ENCODE measurements at regions of chr19 and their contacts with region 1.

Region 1: DNA sequence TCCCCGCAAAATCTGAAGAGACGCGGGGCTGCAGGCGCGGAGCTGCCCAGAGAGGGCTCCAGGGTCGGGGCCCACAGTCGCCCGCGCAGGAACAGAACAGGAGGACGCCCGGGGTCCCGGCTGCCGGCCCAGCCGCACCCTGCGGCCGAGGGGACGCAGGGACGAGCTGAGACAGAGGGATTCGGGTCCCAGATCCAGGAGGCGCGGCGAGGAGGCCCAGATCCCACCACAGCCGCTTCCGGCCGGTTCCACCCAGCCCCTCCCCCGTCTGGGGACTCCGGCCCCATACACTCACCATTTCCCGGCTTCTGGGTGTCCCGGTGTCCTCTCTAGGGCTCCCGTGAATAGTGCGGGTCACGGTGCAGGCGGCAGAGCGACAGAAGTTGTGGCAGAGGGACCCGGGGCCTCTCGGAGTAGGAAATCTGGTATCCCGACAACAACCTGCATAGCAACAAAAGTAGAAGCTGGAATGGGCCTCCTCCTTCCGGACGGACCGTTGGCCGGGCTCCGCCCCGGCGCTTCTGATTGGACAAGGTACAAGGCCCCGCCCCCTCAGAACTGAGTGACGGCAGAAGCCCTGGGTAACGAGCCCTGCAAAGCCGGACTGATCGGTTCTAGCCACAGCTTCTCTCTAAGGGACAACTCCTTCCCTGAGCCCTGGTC is at the start of gene ZNF20:
- DNase-seq: peak; percentile 74 to 94 (median 84)
- ATAC-seq: peak; percentile 85
- H3K4me3 ChIP-seq: peak within 1 kb of the TSS; percentile 97
- H3K4me3 Mint-ChIP-seq: peak within 1 kb of the TSS; percentile 88
- H3K27ac ChIP-seq: peak within 1 kb of the TSS in 1 of 2 donors; percentile 44
- H3K27ac Mint-ChIP-seq: peak within 1 kb of the TSS; percentile 47
- H3K4me1 ChIP-seq: peaks cover 36% of the 10 kb centered on the region
- H3K4me1 Mint-ChIP-seq: peaks cover 43% of the 10 kb centered on the region
- H3K27me3 ChIP-seq: no peaks in the 10 kb centered on the region
- H3K27me3 Mint-ChIP-seq: no peaks in the 10 kb centered on the region
- CTCF ChIP-seq: no peak
- total RNA-seq, gene ZNF20: 1.0 to 1.2 TPM

Region 2: DNA sequence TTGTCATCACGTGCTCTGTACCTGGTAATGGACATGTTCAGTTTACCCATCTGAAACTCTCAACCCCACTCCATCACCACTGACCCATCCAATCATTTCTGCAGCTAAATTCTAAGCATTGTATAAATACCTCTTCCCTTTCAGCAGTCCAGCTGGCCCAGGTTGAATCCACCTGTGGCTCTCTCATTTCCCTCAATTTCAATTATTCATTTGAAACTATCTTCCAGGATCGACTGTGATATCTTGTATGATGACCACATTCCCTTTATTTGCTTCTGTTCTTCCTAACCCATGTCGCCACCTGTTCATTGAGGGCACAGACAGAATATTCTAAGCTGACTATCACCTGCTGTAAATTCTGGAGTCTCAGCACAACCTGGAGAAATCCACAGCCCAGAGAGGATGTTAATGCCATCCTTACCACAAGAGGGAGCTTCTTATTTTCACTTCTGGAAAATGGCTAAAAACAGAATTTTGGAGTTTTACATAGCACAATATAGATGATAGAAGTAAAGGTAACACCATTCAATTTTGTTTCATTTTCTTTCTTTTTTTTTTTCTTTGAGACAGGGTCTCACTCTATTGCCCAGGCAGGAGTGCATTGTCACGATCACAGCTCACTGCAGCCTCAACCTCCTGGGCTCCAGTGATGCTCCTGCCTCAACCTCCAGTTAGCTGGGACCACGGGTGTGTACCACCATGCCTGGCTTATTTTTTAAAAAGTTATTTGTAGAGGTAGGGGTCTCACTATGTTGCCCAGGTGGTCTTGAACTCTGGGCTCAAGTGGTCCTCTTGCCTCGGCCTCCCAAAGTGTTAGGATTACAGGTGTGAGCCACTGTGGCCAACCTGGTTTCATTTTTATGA is 439.9 kb before region 1 on chr19:
- CTCF ChIA-PET with region 1: no interaction called
- POLR2A ChIA-PET with region 1: no interaction called
- intact Hi-C with region 1: loop called (anchors 2 to 5 kb)
- DNase-seq: peak in 3 of 14 experiments; percentile 32 to 53 (median 51)
- ATAC-seq: peak; percentile 17
- H3K4me3 ChIP-seq: no peak overlapping the region
- H3K4me3 Mint-ChIP-seq: no peak overlapping the region
- H3K27ac ChIP-seq: no peak overlapping the region
- H3K27ac Mint-ChIP-seq: no peak overlapping the region
- H3K4me1 ChIP-seq: peaks cover 1% of the 10 kb centered on the region
- H3K4me1 Mint-ChIP-seq: peaks cover under 1% of the 10 kb centered on the region
- H3K27me3 ChIP-seq: peaks cover 3 to 7% of the 10 kb centered on the region in 2 experiments
- H3K27me3 Mint-ChIP-seq: peaks cover 16% of the 10 kb centered on the region
- CTCF ChIP-seq: peak; percentile 67

Region 3: DNA sequence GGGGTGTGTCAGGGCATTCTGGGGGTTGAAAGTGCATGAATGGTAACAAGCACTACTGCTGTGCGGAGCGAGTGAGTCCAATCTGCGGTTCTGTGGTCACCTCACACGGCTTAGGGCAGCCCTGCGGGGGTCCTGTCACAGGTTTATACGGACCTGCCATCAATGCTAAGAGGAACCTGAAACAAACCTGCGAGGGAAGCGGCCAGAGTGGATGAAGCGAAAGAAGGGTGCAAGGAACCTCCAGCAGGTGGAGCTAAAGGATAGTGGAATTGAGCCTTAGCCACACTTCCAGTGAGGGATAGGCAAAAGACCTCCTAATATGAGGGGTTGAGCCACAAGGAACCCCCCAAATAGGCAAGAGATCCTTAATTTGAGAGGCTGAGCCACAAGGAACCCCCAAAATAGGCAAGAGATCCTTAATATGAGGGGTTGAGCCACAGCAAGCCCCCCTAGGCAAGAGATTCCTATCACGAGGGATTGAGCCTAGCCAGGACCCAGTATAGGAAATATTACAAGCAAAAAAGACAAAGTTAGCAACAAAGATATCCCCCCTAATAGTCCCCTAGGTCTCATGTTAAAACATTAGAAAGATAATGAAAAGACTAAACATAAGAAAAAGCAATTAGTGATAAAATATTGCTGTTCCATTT is 258.7 kb before region 1 on chr19:
- CTCF ChIA-PET with region 1: interaction called, 11 read pairs
- POLR2A ChIA-PET with region 1: interaction called, 3 read pairs
- intact Hi-C with region 1: loop called (anchors 1 kb)
- DNase-seq: peak; percentile 39 to 82 (median 54)
- ATAC-seq: peak; percentile 60
- H3K4me3 ChIP-seq: no peak overlapping the region
- H3K4me3 Mint-ChIP-seq: no peak overlapping the region
- H3K27ac ChIP-seq: no peak overlapping the region
- H3K27ac Mint-ChIP-seq: no peak overlapping the region
- H3K4me1 ChIP-seq: peaks cover 4% of the 10 kb centered on the region
- H3K4me1 Mint-ChIP-seq: no peaks in the 10 kb centered on the region
- H3K27me3 ChIP-seq: no peaks in the 10 kb centered on the region
- H3K27me3 Mint-ChIP-seq: no peaks in the 10 kb centered on the region
- CTCF ChIP-seq: peak; percentile 74

Region 4: DNA sequence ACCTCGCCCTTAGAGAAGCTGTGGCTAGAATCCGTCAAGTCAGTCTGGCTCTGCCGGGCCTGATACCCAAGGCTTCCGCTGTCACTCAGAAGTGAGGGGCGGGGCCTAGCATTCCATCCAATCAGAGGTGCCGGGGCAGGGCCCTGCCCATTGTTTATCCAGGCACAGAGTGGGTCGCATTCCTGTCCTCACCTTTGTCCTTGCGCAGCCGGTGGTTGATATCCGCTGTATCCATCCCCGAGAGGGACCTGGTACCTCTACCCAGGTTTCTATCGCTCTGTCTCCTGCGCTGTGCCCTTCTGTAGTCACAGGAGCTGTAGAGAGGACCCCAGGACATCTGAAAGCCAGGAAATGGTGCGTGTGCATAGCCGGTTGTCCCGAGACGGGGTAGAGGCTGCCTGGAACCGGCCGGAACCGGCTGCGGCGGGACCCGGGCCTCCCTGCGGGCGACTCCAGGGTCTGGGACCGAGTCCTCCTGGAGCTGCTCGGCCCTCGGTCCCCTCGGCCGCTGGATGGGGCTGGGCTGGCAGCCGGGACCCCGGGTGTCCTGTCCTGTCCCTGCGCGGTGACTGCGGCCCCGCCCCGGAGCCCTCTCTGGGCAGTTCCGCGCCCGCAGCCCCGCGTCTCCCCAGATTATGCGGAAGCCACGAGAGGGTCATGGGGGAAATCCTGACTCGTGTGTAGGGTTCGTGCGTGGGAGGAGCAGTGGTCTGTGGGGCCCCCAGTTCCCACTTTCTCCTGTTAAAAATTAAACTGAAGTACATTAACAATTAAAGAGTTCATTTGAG is 175.0 kb before region 1 on chr19 and contains the start of gene ZNF763:
- CTCF ChIA-PET with region 1: interaction called, 20 read pairs
- POLR2A ChIA-PET with region 1: interaction called, 6 read pairs
- intact Hi-C with region 1: loop called (anchors 1 kb)
- DNase-seq: peak; percentile 80 to 95 (median 86)
- ATAC-seq: peak; percentile 93
- H3K4me3 ChIP-seq: peak within 1 kb of the TSS; percentile 67
- H3K4me3 Mint-ChIP-seq: peak within 1 kb of the TSS; percentile 95
- H3K27ac ChIP-seq: peak within 1 kb of the TSS; percentile 80 to 83
- H3K27ac Mint-ChIP-seq: peak within 1 kb of the TSS; percentile 88
- H3K4me1 ChIP-seq: peaks cover 28% of the 10 kb centered on the region
- H3K4me1 Mint-ChIP-seq: peaks cover 27% of the 10 kb centered on the region
- H3K27me3 ChIP-seq: no peaks in the 10 kb centered on the region
- H3K27me3 Mint-ChIP-seq: no peaks in the 10 kb centered on the region
- CTCF ChIP-seq: no peak
- total RNA-seq, gene ZNF763: 2.5 to 2.9 TPM

Region 5: DNA sequence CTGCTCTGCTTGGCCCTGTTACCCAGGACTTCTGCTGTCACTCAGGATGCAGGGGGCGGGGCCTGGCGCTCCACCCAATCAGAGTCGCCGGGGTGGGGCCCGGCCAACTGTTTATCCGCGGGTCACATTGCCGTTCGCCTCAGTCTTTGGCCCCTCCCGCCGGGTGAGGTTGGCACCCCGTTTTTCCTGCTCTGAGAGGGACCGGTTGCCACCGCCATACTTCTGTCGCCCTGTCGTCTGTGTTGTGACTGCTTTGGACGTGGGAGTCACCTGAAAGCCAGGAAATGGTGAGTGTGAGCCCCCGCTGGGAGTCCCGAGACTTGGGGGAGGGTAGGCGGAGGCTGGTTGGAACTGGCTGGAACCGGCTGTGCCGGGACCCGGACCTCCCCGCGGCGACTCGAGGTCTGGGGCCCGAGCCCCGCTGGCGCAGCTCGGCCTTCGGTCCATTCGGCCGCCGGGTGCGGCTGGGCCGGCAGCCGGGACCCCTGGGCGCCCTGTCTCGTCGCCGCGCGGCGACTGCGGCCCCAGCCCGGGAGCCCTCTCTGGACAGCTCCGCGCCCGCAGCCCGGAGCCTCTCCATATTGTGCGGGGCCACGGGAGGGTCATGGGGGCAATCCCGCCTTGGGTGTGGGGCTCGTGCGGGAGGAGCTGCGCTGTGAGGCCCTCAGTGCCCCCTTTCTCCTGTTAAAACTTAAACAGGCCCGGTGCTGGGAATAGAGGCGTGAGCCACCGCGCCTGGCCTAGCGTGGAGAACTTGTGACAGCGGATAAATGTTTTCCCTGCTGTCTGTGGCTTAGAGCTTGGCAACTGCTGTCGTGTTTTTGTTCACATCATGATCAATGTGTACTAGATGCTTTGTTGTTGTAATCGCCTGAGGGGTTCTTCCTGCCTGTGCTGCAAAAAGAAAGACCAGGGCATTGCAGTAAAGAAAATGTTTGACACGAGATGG is 75.2 kb before region 1 on chr19 and contains the start of gene ZNF844:
- CTCF ChIA-PET with region 1: interaction called, 23 read pairs
- POLR2A ChIA-PET with region 1: interaction called, 4 read pairs
- intact Hi-C with region 1: no loop called
- DNase-seq: peak; percentile 40 to 84 (median 62)
- ATAC-seq: peak; percentile 87
- H3K4me3 ChIP-seq: peak within 1 kb of the TSS; percentile 74
- H3K4me3 Mint-ChIP-seq: peak within 1 kb of the TSS; percentile 91
- H3K27ac ChIP-seq: peak within 1 kb of the TSS in 1 of 2 donors; percentile 46
- H3K27ac Mint-ChIP-seq: peak within 1 kb of the TSS; percentile 65
- H3K4me1 ChIP-seq: peaks cover 21% of the 10 kb centered on the region
- H3K4me1 Mint-ChIP-seq: peaks cover 5% of the 10 kb centered on the region
- H3K27me3 ChIP-seq: no peaks in the 10 kb centered on the region
- H3K27me3 Mint-ChIP-seq: no peaks in the 10 kb centered on the region
- CTCF ChIP-seq: no peak
- total RNA-seq, gene ZNF844: 22.2 to 23.7 TPM

Region 6: DNA sequence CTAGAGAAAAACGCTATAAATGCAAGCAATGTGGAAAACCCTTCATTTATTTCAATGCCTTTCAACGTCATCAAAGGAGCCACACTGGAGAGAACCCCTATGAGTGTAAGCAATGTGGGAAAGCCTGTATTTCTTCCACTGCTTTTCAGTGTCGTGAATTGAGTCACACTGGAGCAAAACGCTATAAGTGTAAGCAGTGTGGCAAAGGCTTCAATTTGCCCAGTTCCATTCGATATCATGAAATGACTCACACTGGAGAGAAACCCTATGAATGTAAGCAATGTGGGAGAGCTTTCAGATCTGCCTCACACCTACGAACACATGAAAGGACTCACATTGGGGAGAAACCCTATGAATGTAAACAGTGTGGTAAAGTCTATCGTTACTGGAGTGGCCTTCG is 27.3 kb before region 1 on chr19:
- CTCF ChIA-PET with region 1: no interaction called
- POLR2A ChIA-PET with region 1: no interaction called
- intact Hi-C with region 1: no loop called
- DNase-seq: no peak
- ATAC-seq: no peak
- H3K4me3 ChIP-seq: no peak overlapping the region
- H3K4me3 Mint-ChIP-seq: no peak overlapping the region
- H3K27ac ChIP-seq: no peak overlapping the region
- H3K27ac Mint-ChIP-seq: no peak overlapping the region
- H3K4me1 ChIP-seq: no peaks in the 10 kb centered on the region
- H3K4me1 Mint-ChIP-seq: no peaks in the 10 kb centered on the region
- H3K27me3 ChIP-seq: no peaks in the 10 kb centered on the region
- H3K27me3 Mint-ChIP-seq: no peaks in the 10 kb centered on the region
- CTCF ChIP-seq: no peak

Region 7: DNA sequence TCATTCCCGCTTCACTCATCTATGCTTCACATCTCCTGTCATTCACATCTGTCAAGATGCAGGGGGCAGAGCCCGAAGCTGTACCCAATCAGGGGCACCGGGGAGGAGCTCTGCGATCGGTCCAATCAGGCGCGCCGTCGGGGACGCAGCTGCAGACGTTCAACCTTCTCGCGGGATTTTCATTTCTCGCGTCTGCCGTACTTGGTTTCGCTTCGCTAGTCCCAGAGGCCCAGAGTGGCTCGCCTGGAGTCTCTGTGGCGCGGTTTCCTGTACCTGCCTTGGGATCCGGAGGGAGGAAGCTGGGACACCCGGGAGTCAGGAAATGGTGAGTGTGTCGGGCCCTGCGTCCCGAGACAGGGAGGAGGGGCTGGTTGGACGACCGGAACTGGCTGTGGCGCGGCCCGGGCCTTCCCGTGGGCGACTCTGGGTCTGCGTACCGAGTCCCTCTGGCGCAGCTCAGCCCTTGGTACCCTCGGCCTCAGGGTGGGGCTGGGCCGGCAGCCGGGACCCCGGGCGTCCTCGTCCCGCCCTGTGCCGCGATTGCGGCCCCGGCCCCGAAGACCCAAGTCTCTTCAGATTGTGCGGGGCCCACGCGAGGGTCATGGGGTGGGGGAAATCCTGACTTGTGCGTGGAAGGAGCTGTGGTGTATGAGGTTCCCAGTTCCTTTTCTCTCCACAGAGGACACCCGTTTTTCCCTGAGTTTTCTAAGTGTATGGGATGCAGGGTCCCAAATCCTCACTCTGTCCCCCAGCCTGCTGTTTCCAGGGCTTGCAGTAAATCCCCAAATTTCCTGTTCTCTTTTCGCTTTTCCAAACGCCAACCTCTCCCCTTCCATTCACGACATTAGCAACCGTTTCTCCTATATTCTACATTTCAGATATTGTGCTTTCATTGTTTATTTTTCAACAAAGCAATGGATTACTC is 23.1 kb after region 1 on chr19 and contains the start of gene ZNF136:
- CTCF ChIA-PET with region 1: interaction called, 6 read pairs
- POLR2A ChIA-PET with region 1: interaction called, 10 read pairs
- intact Hi-C with region 1: no loop called
- DNase-seq: peak; percentile 84 to 97 (median 90)
- ATAC-seq: peak; percentile 99
- H3K4me3 ChIP-seq: peak within 1 kb of the TSS; percentile 89
- H3K4me3 Mint-ChIP-seq: peak within 1 kb of the TSS; percentile 97
- H3K27ac ChIP-seq: peak within 1 kb of the TSS; percentile 88 to 96
- H3K27ac Mint-ChIP-seq: peak within 1 kb of the TSS; percentile 89
- H3K4me1 ChIP-seq: peaks cover 42% of the 10 kb centered on the region
- H3K4me1 Mint-ChIP-seq: peaks cover 50% of the 10 kb centered on the region
- H3K27me3 ChIP-seq: no peaks in the 10 kb centered on the region
- H3K27me3 Mint-ChIP-seq: no peaks in the 10 kb centered on the region
- CTCF ChIP-seq: no peak
- total RNA-seq, gene ZNF136: 40.5 to 45.6 TPM

Region 8: GRCh38 chr19:12736995-12737834 is 597.2 kb after region 1 on chr19 and contains the start of gene GET3:
- CTCF ChIA-PET with region 1: no interaction called
- POLR2A ChIA-PET with region 1: no interaction called
- intact Hi-C with region 1: no loop called
- DNase-seq: peak; percentile 66 to 92 (median 74)
- ATAC-seq: peak; percentile 82
- H3K4me3 ChIP-seq: peak within 1 kb of the TSS; percentile 79
- H3K4me3 Mint-ChIP-seq: peak within 1 kb of the TSS; percentile 96
- H3K27ac ChIP-seq: peak within 1 kb of the TSS; percentile 76
- H3K27ac Mint-ChIP-seq: peak within 1 kb of the TSS; percentile 86
- H3K4me1 ChIP-seq: peaks cover 52% of the 10 kb centered on the region
- H3K4me1 Mint-ChIP-seq: peaks cover 38% of the 10 kb centered on the region
- H3K27me3 ChIP-seq: no peaks in the 10 kb centered on the region
- H3K27me3 Mint-ChIP-seq: no peaks in the 10 kb centered on the region
- CTCF ChIP-seq: no peak
- total RNA-seq, gene GET3: 13.9 to 14.5 TPM

Measured in CD4-positive, alpha-beta T cell (primary cell).